Activated CD8-positive, alpha-beta T cell treated with anti-CD3 and anti-CD28 coated beads, Interleukin-2, amount 10 ng/mL, durations not matched to agents 7 days and 5 days (primary cell): ENCODE measurements at regions of chr2 and their contacts with region 1.

Region 1: DNA sequence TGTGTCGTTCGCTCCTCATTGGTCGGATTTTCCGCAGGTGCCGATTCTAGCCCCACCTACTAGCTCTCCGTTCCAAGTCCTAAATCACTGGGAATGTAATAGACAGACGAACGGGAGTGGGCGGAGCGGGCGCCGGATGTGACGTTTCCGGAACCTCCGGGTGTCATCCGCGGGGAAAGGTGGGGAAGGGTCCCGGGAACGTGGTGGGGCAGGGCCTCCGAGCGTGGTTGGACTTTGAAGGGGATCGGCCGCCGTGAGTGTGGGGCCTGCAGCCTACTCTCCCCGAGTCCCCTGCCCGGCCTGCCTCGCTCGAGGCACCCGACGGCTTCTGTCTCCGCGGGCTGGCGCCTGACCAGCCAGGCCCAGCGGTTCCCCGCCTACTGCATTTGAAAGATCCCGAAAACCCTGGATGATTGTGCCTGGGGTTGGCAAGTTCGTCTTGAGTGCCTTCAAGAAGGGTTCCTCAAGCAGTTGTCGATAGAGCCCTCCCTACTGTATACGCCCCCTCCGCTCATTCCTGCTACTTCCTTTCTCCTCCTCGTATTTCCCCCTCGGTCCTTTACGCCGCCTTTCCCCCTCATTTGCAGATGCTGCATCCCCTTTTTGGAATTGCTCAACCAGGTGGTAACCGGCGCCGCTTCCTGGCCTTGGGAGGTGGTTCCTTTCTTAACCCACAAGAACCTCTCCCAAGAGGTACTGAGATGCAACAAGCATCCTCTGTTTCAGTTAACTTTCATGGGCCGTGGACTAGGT is at the start of gene STAMBP:
- DNase-seq: peak; percentile 95
- ATAC-seq: peak; percentile 93
- H3K4me3 Mint-ChIP-seq: peak within 1 kb of the TSS; percentile 94
- H3K27ac Mint-ChIP-seq: peak within 1 kb of the TSS; percentile 94
- H3K4me1 Mint-ChIP-seq: peaks cover 49% of the 10 kb centered on the region
- H3K27me3 Mint-ChIP-seq: peaks cover 2% of the 10 kb centered on the region
- total RNA-seq, gene STAMBP: 33.6 to 34.9 TPM

Region 2: DNA sequence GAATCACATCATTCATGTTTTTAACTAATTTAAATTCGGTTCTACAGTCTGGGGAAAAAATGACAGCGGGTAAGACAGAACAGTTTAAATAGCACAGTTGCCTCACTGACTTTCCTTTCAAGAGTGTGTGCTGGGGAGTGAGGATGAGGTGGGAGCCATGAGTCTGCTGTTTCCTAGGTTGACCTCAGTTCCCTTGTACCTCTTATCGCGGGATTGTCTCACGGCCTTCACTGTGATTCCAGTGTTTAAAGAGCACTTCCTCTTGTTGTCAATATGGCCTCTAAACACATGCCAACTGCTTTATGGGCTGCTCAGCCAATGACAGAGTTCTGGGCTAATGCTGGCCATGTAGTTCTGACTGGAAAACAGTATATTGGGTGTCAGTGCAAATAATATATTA is 485.0 kb before region 1 on chr2:
- CTCF ChIA-PET with region 1: no interaction called
- POLR2A ChIA-PET with region 1: no interaction called
- DNase-seq: no peak
- ATAC-seq: no peak
- H3K4me3 Mint-ChIP-seq: no peak overlapping the region
- H3K27ac Mint-ChIP-seq: no peak overlapping the region
- H3K4me1 Mint-ChIP-seq: no peaks in the 10 kb centered on the region
- H3K27me3 Mint-ChIP-seq: peaks cover 12% of the 10 kb centered on the region

Region 3: GRCh38 chr2:73839652-73840411 is 10.8 kb after region 1 on chr2:
- CTCF ChIA-PET with region 1: interaction called, 12 read pairs
- POLR2A ChIA-PET with region 1: interaction called, 3 read pairs
- DNase-seq: no peak
- ATAC-seq: no peak
- H3K4me3 Mint-ChIP-seq: no peak overlapping the region
- H3K27ac Mint-ChIP-seq: no peak overlapping the region
- H3K4me1 Mint-ChIP-seq: peaks cover 10% of the 10 kb centered on the region
- H3K27me3 Mint-ChIP-seq: no peaks in the 10 kb centered on the region

Region 4: DNA sequence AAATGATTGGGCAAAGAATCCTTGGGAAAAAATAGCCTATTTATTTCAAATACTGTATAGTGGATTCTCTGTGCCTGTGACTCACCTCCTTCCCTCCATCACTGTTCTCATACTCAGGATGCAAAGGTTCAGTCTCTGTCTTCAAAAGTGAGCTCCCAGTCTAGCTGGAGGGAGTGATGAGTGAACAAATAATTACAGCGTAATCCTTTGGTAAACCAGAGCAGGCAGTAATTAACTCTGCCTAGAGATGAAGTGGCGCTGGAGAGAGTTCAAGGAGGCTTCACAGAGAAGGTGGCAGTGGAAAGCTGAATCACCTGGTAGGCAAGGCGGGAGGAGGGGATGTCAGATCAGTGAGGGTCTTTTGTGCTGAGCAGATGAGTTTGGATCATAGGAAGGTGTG is 104.2 kb after region 1 on chr2:
- CTCF ChIA-PET with region 1: interaction called, 17 read pairs
- POLR2A ChIA-PET with region 1: no interaction called
- DNase-seq: no peak
- ATAC-seq: no peak
- H3K4me3 Mint-ChIP-seq: no peak overlapping the region
- H3K27ac Mint-ChIP-seq: no peak overlapping the region
- H3K4me1 Mint-ChIP-seq: peaks cover 73% of the 10 kb centered on the region
- H3K27me3 Mint-ChIP-seq: no peaks in the 10 kb centered on the region

Region 5: GRCh38 chr2:74104839-74105238 is 275.8 kb after region 1 on chr2:
- CTCF ChIA-PET with region 1: interaction called, 27 read pairs
- POLR2A ChIA-PET with region 1: no interaction called
- DNase-seq: no peak
- ATAC-seq: no peak
- H3K4me3 Mint-ChIP-seq: no peak overlapping the region
- H3K27ac Mint-ChIP-seq: peak overlapping the region; percentile 23
- H3K4me1 Mint-ChIP-seq: no peaks in the 10 kb centered on the region
- H3K27me3 Mint-ChIP-seq: no peaks in the 10 kb centered on the region

Region 6: GRCh38 chr2:74147727-74148456 is 318.9 kb after region 1 on chr2 and contains the start of gene BOLA3:
- CTCF ChIA-PET with region 1: interaction called, 215 read pairs
- POLR2A ChIA-PET with region 1: no interaction called
- DNase-seq: peak; percentile 88
- ATAC-seq: peak; percentile 97
- H3K4me3 Mint-ChIP-seq: no peak within 1 kb of the TSS
- H3K27ac Mint-ChIP-seq: no peak within 1 kb of the TSS
- H3K4me1 Mint-ChIP-seq: peaks cover 9% of the 10 kb centered on the region
- H3K27me3 Mint-ChIP-seq: no peaks in the 10 kb centered on the region
- total RNA-seq, gene BOLA3: 79.7 to 85.4 TPM

Region 7: GRCh38 chr2:74198461-74199274 is 369.7 kb after region 1 on chr2 and contains the start of gene MTHFD2:
- CTCF ChIA-PET with region 1: interaction called, 18 read pairs
- POLR2A ChIA-PET with region 1: interaction called, 5 read pairs
- DNase-seq: peak; percentile 95
- ATAC-seq: peak; percentile 92
- H3K4me3 Mint-ChIP-seq: peak within 1 kb of the TSS; percentile 97
- H3K27ac Mint-ChIP-seq: peak within 1 kb of the TSS; percentile 100
- H3K4me1 Mint-ChIP-seq: peaks cover 45% of the 10 kb centered on the region
- H3K27me3 Mint-ChIP-seq: no peaks in the 10 kb centered on the region
- total RNA-seq, gene MTHFD2: 162 to 164 TPM

Region 8: DNA sequence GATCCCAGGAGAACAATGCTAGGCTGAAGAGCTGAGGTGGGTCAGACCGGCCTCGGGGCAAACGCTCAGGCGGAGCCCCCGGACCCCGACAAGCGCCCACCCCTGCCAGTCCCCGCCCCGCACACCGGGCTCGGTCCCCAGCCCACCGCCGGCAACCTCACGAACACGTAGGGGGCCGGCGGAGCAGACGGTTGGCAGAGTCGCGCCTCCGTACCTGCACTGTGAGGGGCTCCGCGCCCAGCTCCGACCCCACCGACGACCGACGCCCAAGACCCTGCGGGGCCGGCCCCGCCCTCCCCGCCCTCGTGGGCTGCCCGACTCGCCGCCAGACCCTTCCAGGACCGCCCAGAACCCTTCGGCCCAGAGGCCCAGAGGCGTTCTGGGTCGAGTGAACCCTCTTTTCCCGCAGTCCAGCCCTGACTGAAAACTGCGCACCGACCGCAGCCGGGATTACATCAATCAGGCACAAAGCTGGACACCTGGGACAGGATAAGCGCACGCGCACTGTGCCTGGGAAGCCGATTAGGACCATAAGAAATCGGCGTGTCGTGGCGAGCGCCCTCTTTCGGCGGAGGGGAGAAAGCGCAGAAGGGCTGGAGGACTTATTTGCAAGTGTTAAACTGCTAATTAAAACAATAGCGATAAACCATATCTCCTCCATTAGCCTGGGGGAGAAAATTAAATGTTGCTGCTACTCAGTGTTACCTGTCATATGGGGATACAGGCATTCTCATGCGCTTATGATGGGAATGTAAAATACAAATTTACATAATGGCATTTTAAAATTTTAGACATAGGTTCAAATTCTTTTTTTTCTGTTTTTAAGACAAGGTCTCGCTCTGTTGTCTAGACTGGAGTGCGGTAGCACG is 562.8 kb after region 1 on chr2:
- CTCF ChIA-PET with region 1: interaction called, 11 read pairs
- POLR2A ChIA-PET with region 1: interaction called, 3 read pairs
- DNase-seq: peak; percentile 97
- ATAC-seq: peak; percentile 88
- H3K4me3 Mint-ChIP-seq: peak overlapping the region; percentile 93
- H3K27ac Mint-ChIP-seq: peak overlapping the region; percentile 99
- H3K4me1 Mint-ChIP-seq: peaks cover 7% of the 10 kb centered on the region
- H3K27me3 Mint-ChIP-seq: peaks cover 6% of the 10 kb centered on the region